ENCODE measurements at regions of chr20 and their contacts with region 1.

Region 1: GRCh38 chr20:58692594-58693226 is at the start of gene NPEPL1:
- DNase-seq: peak; percentile 58
- ATAC-seq: peak; percentile 79
- H3K4me3 Mint-ChIP-seq: peak within 1 kb of the TSS; percentile 58
- H3K27ac Mint-ChIP-seq: peak within 1 kb of the TSS; percentile 96
- H3K4me1 Mint-ChIP-seq: peaks cover 41% of the 10 kb centered on the region
- H3K27me3 Mint-ChIP-seq: no peaks in the 10 kb centered on the region
- CTCF ChIP-seq: no peak
- total RNA-seq, gene NPEPL1: 35.3 to 39.9 TPM (median 35.8 TPM) in 3 replicates

Region 2: GRCh38 chr20:58669287-58670006 is 23.3 kb before region 1 on chr20:
- CTCF ChIA-PET with region 1: interaction called, 12 read pairs
- POLR2A ChIA-PET with region 1: no interaction called
- DNase-seq: peak; percentile 73
- ATAC-seq: peak; percentile 78
- H3K4me3 Mint-ChIP-seq: peak overlapping the region; percentile 49
- H3K27ac Mint-ChIP-seq: peak overlapping the region; percentile 100
- H3K4me1 Mint-ChIP-seq: peaks cover 81% of the 10 kb centered on the region
- H3K27me3 Mint-ChIP-seq: no peaks in the 10 kb centered on the region
- CTCF ChIP-seq: no peak

Region 3: DNA sequence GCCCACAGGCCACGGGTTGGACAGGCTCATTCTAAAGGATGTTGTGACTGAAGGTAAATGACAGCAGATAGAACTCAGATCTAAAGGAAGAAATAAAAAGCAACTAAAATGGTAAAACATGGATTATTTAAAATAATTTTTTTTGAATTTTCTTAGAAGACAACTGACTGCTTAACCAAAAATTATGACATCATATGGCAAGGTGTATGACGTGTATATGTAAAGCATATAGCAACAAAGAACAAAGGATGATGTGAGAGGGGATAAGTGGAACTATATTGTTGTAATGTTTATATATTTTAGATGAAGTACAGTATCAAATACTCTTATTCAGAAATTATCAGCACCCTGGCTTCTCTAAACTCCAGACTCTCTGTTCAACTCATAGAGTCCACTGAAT is 38.5 kb after region 1 on chr20:
- CTCF ChIA-PET with region 1: no interaction called
- POLR2A ChIA-PET with region 1: no interaction called
- DNase-seq: no peak
- ATAC-seq: no peak
- H3K4me3 Mint-ChIP-seq: no peak overlapping the region
- H3K27ac Mint-ChIP-seq: no peak overlapping the region
- H3K4me1 Mint-ChIP-seq: no peaks in the 10 kb centered on the region
- H3K27me3 Mint-ChIP-seq: no peaks in the 10 kb centered on the region
- CTCF ChIP-seq: no peak

Region 4: GRCh38 chr20:58746620-58747019 is 53.9 kb after region 1 on chr20:
- CTCF ChIA-PET with region 1: no interaction called
- POLR2A ChIA-PET with region 1: no interaction called
- DNase-seq: no peak
- ATAC-seq: no peak
- H3K4me3 Mint-ChIP-seq: no peak overlapping the region
- H3K27ac Mint-ChIP-seq: no peak overlapping the region
- H3K4me1 Mint-ChIP-seq: peaks cover 14% of the 10 kb centered on the region
- H3K27me3 Mint-ChIP-seq: peaks cover 60% of the 10 kb centered on the region
- CTCF ChIP-seq: no peak

Region 5: DNA sequence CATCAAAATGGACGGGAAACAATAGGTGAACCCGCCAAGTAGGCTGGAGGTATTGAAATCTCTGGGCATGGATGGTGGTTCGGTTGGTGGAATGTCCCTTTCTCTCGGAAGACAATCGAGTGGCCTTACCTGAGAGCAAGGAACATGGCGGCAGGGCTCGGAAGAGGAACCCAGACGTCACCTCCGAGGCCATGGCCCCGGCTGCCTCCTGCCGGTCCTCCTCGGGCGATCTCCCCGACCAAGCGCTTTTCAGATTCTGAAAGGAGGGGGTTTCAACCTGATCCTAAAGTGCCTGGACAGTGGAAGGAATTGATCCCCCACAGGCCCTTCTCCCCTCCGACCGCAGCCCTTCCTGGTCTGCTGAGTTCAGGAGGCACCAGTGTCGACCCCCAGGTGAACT is 110.8 kb after region 1 on chr20:
- CTCF ChIA-PET with region 1: no interaction called
- POLR2A ChIA-PET with region 1: no interaction called
- DNase-seq: no peak
- ATAC-seq: no peak
- H3K4me3 Mint-ChIP-seq: no peak overlapping the region
- H3K27ac Mint-ChIP-seq: no peak overlapping the region
- H3K4me1 Mint-ChIP-seq: peaks cover 70% of the 10 kb centered on the region
- H3K27me3 Mint-ChIP-seq: peaks cover 13% of the 10 kb centered on the region
- CTCF ChIP-seq: no peak

Region 6: GRCh38 chr20:59120491-59120890 is 427.8 kb after region 1 on chr20:
- CTCF ChIA-PET with region 1: no interaction called
- POLR2A ChIA-PET with region 1: no interaction called
- DNase-seq: no peak
- ATAC-seq: no peak
- H3K4me3 Mint-ChIP-seq: no peak overlapping the region
- H3K27ac Mint-ChIP-seq: no peak overlapping the region
- H3K4me1 Mint-ChIP-seq: peaks cover 42% of the 10 kb centered on the region
- H3K27me3 Mint-ChIP-seq: peaks cover 5% of the 10 kb centered on the region
- CTCF ChIP-seq: no peak

Measured in WTC11 (cell line).